Esophagus muscularis mucosa (tissue), 4 donors: ENCODE measurements at regions of chr11 and their contacts with region 1.

Region 1: GRCh38 chr11:22625448-22626287 is at the start of gene FANCF:
- DNase-seq: peak; percentile 98
- H3K4me3 ChIP-seq: peak within 1 kb of the TSS; percentile 65 to 91 (median 82)
- H3K27ac ChIP-seq: peak within 1 kb of the TSS; percentile 81 to 95 (median 88)
- H3K4me1 ChIP-seq: peaks cover 9 to 24% (median 18%) of the 10 kb centered on the region in 4 donors
- H3K27me3 ChIP-seq: no peaks in the 10 kb centered on the region
- CTCF ChIP-seq: no peak
- EP300 ChIP-seq: no peak
- POLR2A ChIP-seq: no peak
- total RNA-seq, gene FANCF: 3.6 to 6.7 (median 4.9) TPM

Region 2: GRCh38 chr11:22829231-22830081 is 203.8 kb after region 1 on chr11 and contains the start of gene SVIP:
- intact Hi-C with region 1: loop called (anchors 10 kb)
- DNase-seq: peak; percentile 97
- H3K4me3 ChIP-seq: peak within 1 kb of the TSS; percentile 74 to 94 (median 90)
- H3K27ac ChIP-seq: peak within 1 kb of the TSS; percentile 85 to 89 (median 86)
- H3K4me1 ChIP-seq: peaks cover 4 to 16% (median 12%) of the 10 kb centered on the region in 4 donors
- H3K27me3 ChIP-seq: no peaks in the 10 kb centered on the region
- CTCF ChIP-seq: peak; percentile 65 to 71 (median 71)
- EP300 ChIP-seq: no peak
- POLR2A ChIP-seq: peak; percentile 28
- total RNA-seq, gene SVIP: 7.9 to 17.0 (median 12.8) TPM